Ascending aorta (tissue), 2 donors: ENCODE measurements at regions of chr19 and their contacts with region 1.

Region 1: DNA sequence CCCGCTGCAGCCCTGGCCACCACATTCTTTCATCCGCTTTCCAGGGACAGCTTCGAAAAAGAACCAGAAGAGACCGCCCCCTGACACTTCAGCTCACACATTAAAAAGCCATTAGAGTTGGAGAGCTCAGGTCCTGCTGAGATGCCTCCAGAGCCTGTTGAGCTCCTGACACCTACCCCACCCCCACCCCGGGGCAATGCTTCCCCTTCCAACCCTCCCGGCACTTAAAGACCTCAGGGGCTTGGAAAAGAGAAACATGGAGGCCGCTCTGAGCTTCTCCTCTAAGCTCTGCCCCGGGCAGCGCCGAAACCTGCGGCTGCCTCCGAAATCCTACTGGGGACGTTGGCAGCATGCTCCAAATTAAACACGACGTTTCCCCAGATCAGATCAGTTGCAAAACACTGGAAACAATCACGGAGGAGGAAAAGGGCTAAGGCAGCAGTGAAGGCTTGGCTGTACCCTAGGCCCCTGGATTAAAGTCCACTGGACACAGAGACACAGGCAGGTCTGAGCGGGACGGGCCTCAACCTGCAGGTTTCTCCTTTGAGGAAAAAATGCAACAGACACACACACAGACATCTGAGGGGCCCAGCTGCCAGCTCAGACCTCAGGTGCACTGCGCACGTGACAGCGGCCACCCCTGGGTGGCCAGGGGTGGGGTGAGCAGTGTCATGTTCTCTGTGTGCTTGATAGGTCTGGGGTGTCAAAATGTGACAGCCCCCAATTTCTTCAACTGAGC is 9.6 kb downstream of the SH3GL1 start:
- DNase-seq: no peak
- H3K4me3 ChIP-seq: peak overlapping the region in 1 of 2 donors; percentile 30
- H3K27ac ChIP-seq: peak overlapping the region; percentile 63 to 75
- H3K4me1 ChIP-seq: peaks cover 35 to 54% of the 10 kb centered on the region in 2 donors
- H3K27me3 ChIP-seq: no peaks in the 10 kb centered on the region
- CTCF ChIP-seq: no peak

Region 2: GRCh38 chr19:4375164-4376027 is 15.3 kb before region 1 on chr19:
- intact Hi-C with region 1: loop called (anchors 2 kb)
- DNase-seq: peak in 1 of 2 donors; percentile 82
- H3K4me3 ChIP-seq: peak overlapping the region in 1 of 2 donors; percentile 16
- H3K27ac ChIP-seq: peak overlapping the region; percentile 91 to 98
- H3K4me1 ChIP-seq: peaks cover 58 to 86% of the 10 kb centered on the region in 2 donors
- H3K27me3 ChIP-seq: no peaks in the 10 kb centered on the region
- CTCF ChIP-seq: peak; percentile 25 to 49 (median 25)